ENCODE measurements at regions of chr15 and their contacts with region 1.

Region 1: DNA sequence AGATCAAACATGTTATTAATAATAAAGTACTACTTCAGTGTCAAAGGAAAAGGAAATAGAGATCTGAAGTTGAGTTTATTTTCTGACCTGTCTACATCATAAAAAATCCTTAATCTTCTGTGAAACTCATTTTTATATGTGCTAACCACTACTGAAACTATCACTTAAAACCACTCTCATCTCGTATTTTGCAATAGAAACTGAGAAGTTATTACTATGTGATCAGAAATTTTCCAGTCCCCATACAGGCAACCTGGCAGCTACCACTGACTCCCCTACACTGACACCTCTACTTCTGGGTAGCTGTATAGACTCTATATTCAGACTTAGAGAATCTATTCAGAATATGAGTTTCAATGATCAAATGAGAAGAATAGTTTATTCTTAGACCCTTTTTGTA is 8.3 kb downstream of the HDGFL3 start:
- DNase-seq: no peak
- H3K4me3 ChIP-seq: no peak overlapping the region
- H3K27ac ChIP-seq: no peak overlapping the region
- H3K4me1 ChIP-seq: peaks cover 23% of the 10 kb centered on the region
- H3K27me3 ChIP-seq: no peaks in the 10 kb centered on the region
- CTCF ChIP-seq: no peak
- POLR2A ChIP-seq: no peak

Region 2: GRCh38 chr15:83178869-83179325 is 20.4 kb before region 1 on chr15:
- CTCF ChIA-PET with region 1: no interaction called
- POLR2A ChIA-PET with region 1: interaction called, 4 read pairs
- dilution Hi-C with region 1: no loop called
- intact Hi-C with region 1: loop called (anchors 2 kb)
- DNase-seq: no peak
- H3K4me3 ChIP-seq: no peak overlapping the region
- H3K27ac ChIP-seq: no peak overlapping the region
- H3K4me1 ChIP-seq: no peaks in the 10 kb centered on the region
- H3K27me3 ChIP-seq: no peaks in the 10 kb centered on the region
- CTCF ChIP-seq: no peak
- POLR2A ChIP-seq: no peak